Breast epithelium (tissue), 4 donors: ENCODE measurements at regions of chr9 and their contacts with region 1.

Region 1: GRCh38 chr9:32200896-32201295 is 183.5 kb upstream of the ACO1 start:
- DNase-seq: no peak
- H3K4me3 ChIP-seq: no peak overlapping the region
- H3K27ac ChIP-seq: no peak overlapping the region
- H3K4me1 ChIP-seq: no peaks in the 10 kb centered on the region
- H3K27me3 ChIP-seq: no peaks in the 10 kb centered on the region
- CTCF ChIP-seq: no peak
- POLR2A ChIP-seq: no peak

Region 2: GRCh38 chr9:32419921-32420320 is 219.0 kb after region 1 on chr9:
- intact Hi-C with region 1: loop called (anchors 5 kb)
- DNase-seq: no peak
- H3K4me3 ChIP-seq: no peak overlapping the region
- H3K27ac ChIP-seq: no peak overlapping the region
- H3K4me1 ChIP-seq: no peaks in the 10 kb centered on the region
- H3K27me3 ChIP-seq: no peaks in the 10 kb centered on the region
- CTCF ChIP-seq: no peak
- POLR2A ChIP-seq: no peak